Panc1 (cell line): ENCODE measurements at regions of chr3 and their contacts with region 1.

Region 1: DNA sequence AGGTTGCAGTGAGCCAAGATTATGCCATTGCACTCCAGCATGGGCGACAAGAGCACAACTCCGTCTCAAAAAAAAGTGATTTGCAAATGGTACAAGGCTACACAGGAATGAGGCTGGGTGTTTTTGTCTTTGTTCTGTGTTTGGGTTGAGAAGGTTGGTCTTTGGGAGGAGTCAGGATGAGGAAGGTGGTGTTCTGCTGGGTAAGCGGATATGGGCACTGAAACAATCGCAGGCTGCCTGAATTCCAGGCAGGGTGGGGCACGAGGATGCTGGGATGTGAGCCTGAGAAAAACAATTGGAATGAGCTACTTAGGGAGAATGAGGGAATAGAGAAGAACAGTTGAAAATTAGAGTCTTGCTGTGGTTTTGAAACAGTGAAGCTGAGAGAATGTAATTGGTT is 51.6 kb downstream of the ZBTB38 start:
- DNase-seq: no peak
- ATAC-seq: no peak
- H3K4me3 ChIP-seq: no peak overlapping the region
- H3K27ac ChIP-seq: no peak overlapping the region
- H3K4me1 ChIP-seq: no peaks in the 10 kb centered on the region
- H3K27me3 ChIP-seq: no peaks in the 10 kb centered on the region
- CTCF ChIP-seq: no peak

Region 2: GRCh38 chr3:141316851-141317250 is 103.1 kb before region 1 on chr3:
- CTCF ChIA-PET with region 1: no interaction called
- POLR2A ChIA-PET with region 1: no interaction called
- in situ Hi-C with region 1: no loop called
- intact Hi-C with region 1: no loop called
- DNase-seq: no peak
- ATAC-seq: no peak
- H3K4me3 ChIP-seq: no peak overlapping the region
- H3K27ac ChIP-seq: no peak overlapping the region
- H3K4me1 ChIP-seq: peaks cover 8% of the 10 kb centered on the region
- H3K27me3 ChIP-seq: no peaks in the 10 kb centered on the region
- CTCF ChIP-seq: no peak

Region 3: DNA sequence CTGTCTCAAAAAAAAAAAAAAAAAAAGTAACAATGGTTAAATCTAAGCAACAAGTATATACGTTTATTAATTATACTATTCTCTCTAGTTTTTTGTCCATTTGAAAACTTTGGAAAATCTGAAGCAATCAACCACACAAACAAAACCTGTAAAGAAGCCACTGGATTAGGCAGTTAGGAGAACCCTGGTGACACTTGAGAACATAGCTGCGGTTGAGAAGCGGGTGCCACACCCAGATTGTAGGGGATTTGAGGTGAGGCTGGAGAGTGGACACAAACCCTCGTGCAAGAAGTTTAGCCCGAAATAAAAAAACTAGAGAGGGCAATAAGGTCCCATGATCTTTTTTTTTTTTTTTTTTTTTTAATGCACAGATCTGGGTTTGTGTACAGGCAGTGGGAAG is 77.5 kb before region 1 on chr3:
- CTCF ChIA-PET with region 1: no interaction called
- POLR2A ChIA-PET with region 1: interaction called, 14 read pairs
- in situ Hi-C with region 1: no loop called
- intact Hi-C with region 1: no loop called
- DNase-seq: no peak
- ATAC-seq: no peak
- H3K4me3 ChIP-seq: no peak overlapping the region
- H3K27ac ChIP-seq: no peak overlapping the region
- H3K4me1 ChIP-seq: no peaks in the 10 kb centered on the region
- H3K27me3 ChIP-seq: no peaks in the 10 kb centered on the region
- CTCF ChIP-seq: no peak